ENCODE measurements at regions of chr1 and their contacts with region 1.

Region 1: GRCh38 chr1:87328272-87329050 is at the start of gene LMO4:
- DNase-seq: peak; percentile 82 to 91
- ATAC-seq: peak; percentile 72 to 87 (median 83)
- H3K4me3 ChIP-seq: peak within 1 kb of the TSS; percentile 91
- H3K4me3 Mint-ChIP-seq: peak within 1 kb of the TSS; percentile 95
- H3K27ac ChIP-seq: peak within 1 kb of the TSS; percentile 84
- H3K27ac Mint-ChIP-seq: peak within 1 kb of the TSS; percentile 88 to 98
- H3K4me1 ChIP-seq: peaks cover 17% of the 10 kb centered on the region
- H3K4me1 Mint-ChIP-seq: peaks cover 44 to 47% of the 10 kb centered on the region in 2 donors
- H3K27me3 ChIP-seq: no peaks in the 10 kb centered on the region
- H3K27me3 Mint-ChIP-seq: no peaks in the 10 kb centered on the region
- CTCF ChIP-seq: no peak
- total RNA-seq, gene LMO4: 38.2 to 50.1 (median 50.0) TPM

Region 2: DNA sequence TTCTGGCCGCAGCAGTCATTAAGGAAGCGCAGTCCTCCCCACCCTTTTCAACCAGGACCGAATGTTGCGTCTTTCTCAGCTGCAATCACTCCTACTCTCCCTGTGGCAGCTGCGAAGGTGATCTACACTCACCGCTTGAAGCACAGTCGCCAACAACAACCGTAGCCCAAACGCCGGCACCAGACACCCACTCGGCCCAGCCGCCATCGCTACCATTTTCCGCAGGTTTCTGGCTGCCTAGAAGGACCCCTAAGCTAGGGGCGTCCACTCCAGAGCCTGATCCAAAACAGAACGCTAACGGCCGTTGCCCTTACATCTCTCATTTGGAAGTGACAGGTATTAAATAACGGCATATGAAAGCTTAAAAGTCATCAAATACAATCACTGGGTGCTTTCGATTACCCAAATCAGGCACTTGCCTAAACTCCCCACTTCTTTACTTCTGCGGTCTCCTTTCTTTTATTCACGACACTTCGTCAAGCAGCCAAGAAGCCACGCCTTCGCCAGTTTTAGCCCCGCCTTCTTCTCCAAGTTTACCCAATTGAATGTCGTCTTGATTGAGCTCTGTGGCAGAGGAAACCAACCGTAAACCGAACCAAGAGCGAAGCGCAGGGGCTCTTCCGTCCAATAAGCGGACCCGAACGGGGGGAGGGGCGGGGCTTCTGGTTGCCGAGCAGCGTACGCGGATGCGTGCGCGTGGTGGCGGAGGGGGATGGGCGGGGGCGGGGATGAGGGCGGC is 414.4 kb before region 1 on chr1 and contains the start of gene SELENOF:
- intact Hi-C with region 1: loop called (anchors 5 kb)
- DNase-seq: peak; percentile 98 to 100
- ATAC-seq: peak; percentile 87 to 96 (median 90)
- H3K4me3 ChIP-seq: peak within 1 kb of the TSS; percentile 84
- H3K4me3 Mint-ChIP-seq: no peak within 1 kb of the TSS
- H3K27ac ChIP-seq: peak within 1 kb of the TSS; percentile 94
- H3K27ac Mint-ChIP-seq: no peak within 1 kb of the TSS
- H3K4me1 ChIP-seq: peaks cover 9% of the 10 kb centered on the region
- H3K4me1 Mint-ChIP-seq: peaks cover 7 to 39% of the 10 kb centered on the region in 2 donors
- H3K27me3 ChIP-seq: no peaks in the 10 kb centered on the region
- H3K27me3 Mint-ChIP-seq: no peaks in the 10 kb centered on the region
- CTCF ChIP-seq: no peak
- total RNA-seq, gene SELENOF: 124 to 163 (median 137) TPM

Region 3: GRCh38 chr1:87108814-87109411 is 219.5 kb before region 1 on chr1:
- intact Hi-C with region 1: no loop called
- DNase-seq: no peak
- ATAC-seq: no peak
- H3K4me3 ChIP-seq: no peak overlapping the region
- H3K4me3 Mint-ChIP-seq: no peak overlapping the region
- H3K27ac ChIP-seq: no peak overlapping the region
- H3K27ac Mint-ChIP-seq: no peak overlapping the region
- H3K4me1 ChIP-seq: no peaks in the 10 kb centered on the region
- H3K4me1 Mint-ChIP-seq: no peaks in the 10 kb centered on the region
- H3K27me3 ChIP-seq: no peaks in the 10 kb centered on the region
- H3K27me3 Mint-ChIP-seq: no peaks in the 10 kb centered on the region
- CTCF ChIP-seq: no peak

Region 4: GRCh38 chr1:88891318-88891950 is 1563.0 kb after region 1 on chr1 and contains the start of gene GTF2B:
- intact Hi-C with region 1: loop called (anchors 5 kb)
- DNase-seq: peak; percentile 93 to 99
- ATAC-seq: peak; percentile 92 to 97 (median 94)
- H3K4me3 ChIP-seq: peak within 1 kb of the TSS; percentile 97
- H3K4me3 Mint-ChIP-seq: peak within 1 kb of the TSS; percentile 99
- H3K27ac ChIP-seq: peak within 1 kb of the TSS; percentile 97
- H3K27ac Mint-ChIP-seq: peak within 1 kb of the TSS; percentile 98 to 99
- H3K4me1 ChIP-seq: peaks cover 5% of the 10 kb centered on the region
- H3K4me1 Mint-ChIP-seq: peaks cover 45 to 51% of the 10 kb centered on the region in 2 donors
- H3K27me3 ChIP-seq: no peaks in the 10 kb centered on the region
- H3K27me3 Mint-ChIP-seq: no peaks in the 10 kb centered on the region
- CTCF ChIP-seq: no peak
- total RNA-seq, gene GTF2B: 45.6 to 71.3 (median 55.6) TPM